Activated CD4-positive, alpha-beta T cell treated with anti-CD3 and anti-CD28 coated beads for 36 hours (primary cell): ENCODE measurements at regions of chr3 and their contacts with region 1.

Region 1: DNA sequence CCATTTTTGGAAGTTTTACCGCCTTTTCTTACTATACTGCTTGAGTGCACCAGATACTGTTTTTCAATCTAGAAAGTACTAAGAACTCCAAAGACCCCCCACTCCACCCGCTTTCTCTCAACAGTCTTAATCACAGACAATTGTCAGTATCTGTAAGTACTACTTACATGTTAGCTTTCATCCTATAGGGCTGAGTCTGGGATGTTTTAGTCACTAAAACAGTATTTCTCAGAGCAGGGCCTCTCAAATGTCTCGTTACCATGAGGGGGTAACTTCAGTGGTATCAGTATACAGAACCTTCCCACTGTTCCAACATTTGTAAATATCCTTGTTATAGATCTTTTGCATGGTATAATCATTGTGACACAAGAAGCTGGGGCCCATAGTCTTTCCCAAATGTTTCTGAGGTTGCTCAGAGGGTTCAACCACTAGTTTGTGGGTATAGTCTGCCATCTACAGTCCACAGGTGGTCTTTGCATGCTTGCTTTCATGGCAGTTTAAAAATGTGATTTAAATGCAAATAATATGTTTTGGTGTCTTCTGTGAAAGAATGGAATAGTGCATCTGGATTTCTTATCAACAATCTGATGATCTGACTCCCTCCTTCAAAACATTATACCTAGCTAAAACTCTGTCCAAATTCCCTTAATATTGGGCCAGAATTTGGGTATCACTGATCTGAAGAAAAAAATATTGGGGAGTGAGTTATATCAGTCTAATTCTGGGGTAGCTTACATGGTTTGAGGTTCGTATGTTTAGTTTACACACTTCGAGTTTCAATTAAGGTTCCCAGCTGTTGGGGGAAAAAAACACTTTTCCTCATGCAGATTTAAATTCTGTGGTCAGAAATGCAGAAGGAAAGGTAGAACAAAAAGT is 18.0 kb upstream of the DNAJC13 start:
- DNase-seq: peak; percentile 35
- ATAC-seq: peak; percentile 49
- H3K4me3 Mint-ChIP-seq: no peak overlapping the region
- H3K27ac Mint-ChIP-seq: no peak overlapping the region
- H3K4me1 Mint-ChIP-seq: no peaks in the 10 kb centered on the region
- H3K27me3 Mint-ChIP-seq: no peaks in the 10 kb centered on the region

Region 2: GRCh38 chr3:131421957-131422498 is 977.3 kb before region 1 on chr3:
- CTCF ChIA-PET with region 1: no interaction called
- POLR2A ChIA-PET with region 1: no interaction called
- intact Hi-C with region 1: no loop called
- DNase-seq: no peak
- ATAC-seq: no peak
- H3K4me3 Mint-ChIP-seq: no peak overlapping the region
- H3K27ac Mint-ChIP-seq: no peak overlapping the region
- H3K4me1 Mint-ChIP-seq: no peaks in the 10 kb centered on the region
- H3K27me3 Mint-ChIP-seq: peaks cover 9% of the 10 kb centered on the region

Region 3: GRCh38 chr3:131794766-131795388 is 604.4 kb before region 1 on chr3:
- CTCF ChIA-PET with region 1: no interaction called
- POLR2A ChIA-PET with region 1: no interaction called
- intact Hi-C with region 1: loop called (anchors 5 to 10 kb)
- DNase-seq: peak; percentile 37
- ATAC-seq: peak; percentile 70
- H3K4me3 Mint-ChIP-seq: no peak overlapping the region
- H3K27ac Mint-ChIP-seq: no peak overlapping the region
- H3K4me1 Mint-ChIP-seq: peaks cover 9% of the 10 kb centered on the region
- H3K27me3 Mint-ChIP-seq: peaks cover 4% of the 10 kb centered on the region

Region 4: GRCh38 chr3:131995891-131996290 is 403.4 kb before region 1 on chr3:
- CTCF ChIA-PET with region 1: no interaction called
- POLR2A ChIA-PET with region 1: no interaction called
- intact Hi-C with region 1: no loop called
- DNase-seq: no peak
- ATAC-seq: no peak
- H3K4me3 Mint-ChIP-seq: no peak overlapping the region
- H3K27ac Mint-ChIP-seq: no peak overlapping the region
- H3K4me1 Mint-ChIP-seq: no peaks in the 10 kb centered on the region
- H3K27me3 Mint-ChIP-seq: peaks cover 13% of the 10 kb centered on the region

Region 5: DNA sequence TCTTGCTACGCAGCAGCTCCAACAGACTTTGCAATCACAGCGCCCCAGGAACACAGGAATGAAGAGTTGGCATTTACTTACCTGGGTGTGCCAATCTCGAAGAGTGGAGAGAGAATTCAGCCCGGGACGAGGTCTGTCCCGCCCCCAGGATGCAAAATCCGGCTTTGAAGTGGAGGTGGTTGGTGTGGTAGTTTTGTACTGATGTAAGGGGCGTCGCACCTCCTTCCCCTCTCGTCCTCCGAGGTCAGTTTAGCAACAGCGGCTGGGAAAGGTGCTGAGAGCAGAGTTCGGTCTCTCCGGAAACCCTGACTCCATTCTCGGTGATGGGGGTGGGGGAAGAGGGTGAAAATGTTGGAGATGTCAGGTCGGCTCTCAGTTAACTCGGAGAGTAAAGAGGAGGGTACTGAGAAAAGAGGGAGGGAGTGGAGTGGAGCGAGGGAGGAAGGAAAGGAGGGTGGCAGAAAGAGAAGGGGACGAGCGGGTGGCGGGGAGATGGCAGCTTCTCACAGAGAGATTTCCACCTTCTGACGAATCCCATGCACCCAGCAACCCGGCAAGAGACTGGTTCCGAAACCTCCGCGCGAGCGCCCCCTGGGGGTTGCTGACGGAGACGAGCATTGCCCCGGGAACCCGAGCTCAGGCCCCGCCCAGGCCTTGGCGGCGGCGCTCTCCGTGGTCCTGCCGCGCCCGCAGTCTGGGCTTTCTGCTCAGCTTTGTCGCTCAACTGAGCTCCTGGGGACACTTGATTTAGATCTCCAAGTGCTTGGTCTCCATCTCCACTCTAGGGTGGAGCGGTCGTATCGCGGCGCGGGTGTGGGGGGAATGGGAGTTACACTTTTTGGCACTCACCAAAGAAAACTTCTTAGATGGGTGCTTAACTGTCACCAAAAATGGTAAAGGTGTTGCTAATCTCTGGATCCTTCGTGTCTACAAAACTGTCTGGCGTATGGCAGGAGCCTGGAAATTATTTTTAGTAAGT is 364.5 kb before region 1 on chr3 and contains the start of gene CPNE4:
- CTCF ChIA-PET with region 1: no interaction called
- POLR2A ChIA-PET with region 1: no interaction called
- intact Hi-C with region 1: loop called in 1 of 2 experiments (anchors 2 kb)
- DNase-seq: peak; percentile 91
- ATAC-seq: peak; percentile 97
- H3K4me3 Mint-ChIP-seq: peak within 1 kb of the TSS; percentile 33
- H3K27ac Mint-ChIP-seq: no peak within 1 kb of the TSS
- H3K4me1 Mint-ChIP-seq: peaks cover 12% of the 10 kb centered on the region
- H3K27me3 Mint-ChIP-seq: peaks cover 62% of the 10 kb centered on the region
- total RNA-seq, gene CPNE4: not detected

Region 6: GRCh38 chr3:132253262-132253878 is 145.9 kb before region 1 on chr3:
- CTCF ChIA-PET with region 1: interaction called, 4 read pairs
- POLR2A ChIA-PET with region 1: no interaction called
- intact Hi-C with region 1: loop called (anchors 1 to 5 kb)
- DNase-seq: peak; percentile 13
- ATAC-seq: peak; percentile 44
- H3K4me3 Mint-ChIP-seq: no peak overlapping the region
- H3K27ac Mint-ChIP-seq: no peak overlapping the region
- H3K4me1 Mint-ChIP-seq: no peaks in the 10 kb centered on the region
- H3K27me3 Mint-ChIP-seq: peaks cover 7% of the 10 kb centered on the region

Region 7: DNA sequence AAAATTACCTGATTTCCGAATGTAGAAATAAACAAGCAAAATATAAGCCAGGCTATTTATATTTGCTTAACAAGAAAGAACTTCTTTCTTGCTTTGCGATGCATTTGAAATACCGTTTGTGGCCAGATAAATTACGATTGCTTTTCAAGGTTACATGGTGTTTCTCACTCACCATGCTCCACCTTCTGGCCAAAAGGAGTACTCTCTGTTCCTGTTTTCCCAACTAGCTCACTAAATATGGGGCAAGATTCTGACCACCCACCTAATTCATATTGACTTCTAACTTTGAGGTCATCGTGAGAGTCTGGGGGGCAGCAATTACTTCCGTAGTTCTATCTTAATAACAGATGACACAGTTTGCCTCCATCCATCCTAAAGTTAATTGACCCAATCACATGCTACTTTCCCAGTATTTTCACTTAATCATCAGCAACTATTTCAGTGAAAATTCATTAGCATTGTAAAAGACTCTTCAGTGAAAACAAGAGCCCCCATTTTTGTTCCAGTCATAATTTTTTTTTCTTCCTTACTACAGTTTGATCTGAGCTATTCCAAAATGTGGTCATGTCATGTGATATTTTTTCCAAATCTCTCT is 56.2 kb before region 1 on chr3:
- CTCF ChIA-PET with region 1: interaction called, 94 read pairs
- POLR2A ChIA-PET with region 1: no interaction called
- intact Hi-C with region 1: no loop called
- DNase-seq: peak; percentile 25
- ATAC-seq: no peak
- H3K4me3 Mint-ChIP-seq: no peak overlapping the region
- H3K27ac Mint-ChIP-seq: no peak overlapping the region
- H3K4me1 Mint-ChIP-seq: peaks cover 2% of the 10 kb centered on the region
- H3K27me3 Mint-ChIP-seq: peaks cover 4% of the 10 kb centered on the region

Region 8: GRCh38 chr3:132352541-132353143 is 46.6 kb before region 1 on chr3:
- CTCF ChIA-PET with region 1: interaction called, 94 read pairs
- POLR2A ChIA-PET with region 1: no interaction called
- intact Hi-C with region 1: loop called (anchors 1 kb)
- DNase-seq: peak; percentile 81
- ATAC-seq: peak; percentile 92
- H3K4me3 Mint-ChIP-seq: no peak overlapping the region
- H3K27ac Mint-ChIP-seq: no peak overlapping the region
- H3K4me1 Mint-ChIP-seq: peaks cover 8% of the 10 kb centered on the region
- H3K27me3 Mint-ChIP-seq: peaks cover 3% of the 10 kb centered on the region

Region 9: GRCh38 chr3:132569153-132569552 is 169.9 kb after region 1 on chr3:
- CTCF ChIA-PET with region 1: no interaction called
- POLR2A ChIA-PET with region 1: no interaction called
- intact Hi-C with region 1: no loop called
- DNase-seq: no peak
- ATAC-seq: peak; percentile 82
- H3K4me3 Mint-ChIP-seq: no peak overlapping the region
- H3K27ac Mint-ChIP-seq: peak overlapping the region; percentile 84
- H3K4me1 Mint-ChIP-seq: peaks cover 17% of the 10 kb centered on the region
- H3K27me3 Mint-ChIP-seq: no peaks in the 10 kb centered on the region

Region 10: DNA sequence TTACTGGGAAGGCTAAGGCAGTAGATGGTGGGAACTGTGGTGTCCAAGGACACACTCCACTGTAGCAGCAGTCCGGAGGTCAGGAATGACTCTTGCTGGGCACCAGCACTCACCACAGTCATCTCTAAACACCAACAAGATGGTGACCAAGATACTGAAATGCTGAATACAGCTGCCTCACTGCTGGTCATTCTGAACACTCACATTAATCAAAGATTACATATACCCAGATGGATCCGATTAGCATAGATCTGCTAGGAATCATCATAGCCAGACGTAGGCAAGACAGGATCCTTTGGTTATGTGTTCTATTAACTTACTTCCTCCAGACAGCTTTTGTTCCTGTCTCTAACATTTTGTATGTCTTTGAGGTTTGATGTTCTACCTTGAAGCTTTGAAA is 865.6 kb after region 1 on chr3:
- CTCF ChIA-PET with region 1: no interaction called
- POLR2A ChIA-PET with region 1: no interaction called
- intact Hi-C with region 1: no loop called
- DNase-seq: no peak
- ATAC-seq: no peak
- H3K4me3 Mint-ChIP-seq: no peak overlapping the region
- H3K27ac Mint-ChIP-seq: no peak overlapping the region
- H3K4me1 Mint-ChIP-seq: no peaks in the 10 kb centered on the region
- H3K27me3 Mint-ChIP-seq: peaks cover 20% of the 10 kb centered on the region